ENCODE measurements at regions of chr15 and their contacts with region 1.

Region 1: DNA sequence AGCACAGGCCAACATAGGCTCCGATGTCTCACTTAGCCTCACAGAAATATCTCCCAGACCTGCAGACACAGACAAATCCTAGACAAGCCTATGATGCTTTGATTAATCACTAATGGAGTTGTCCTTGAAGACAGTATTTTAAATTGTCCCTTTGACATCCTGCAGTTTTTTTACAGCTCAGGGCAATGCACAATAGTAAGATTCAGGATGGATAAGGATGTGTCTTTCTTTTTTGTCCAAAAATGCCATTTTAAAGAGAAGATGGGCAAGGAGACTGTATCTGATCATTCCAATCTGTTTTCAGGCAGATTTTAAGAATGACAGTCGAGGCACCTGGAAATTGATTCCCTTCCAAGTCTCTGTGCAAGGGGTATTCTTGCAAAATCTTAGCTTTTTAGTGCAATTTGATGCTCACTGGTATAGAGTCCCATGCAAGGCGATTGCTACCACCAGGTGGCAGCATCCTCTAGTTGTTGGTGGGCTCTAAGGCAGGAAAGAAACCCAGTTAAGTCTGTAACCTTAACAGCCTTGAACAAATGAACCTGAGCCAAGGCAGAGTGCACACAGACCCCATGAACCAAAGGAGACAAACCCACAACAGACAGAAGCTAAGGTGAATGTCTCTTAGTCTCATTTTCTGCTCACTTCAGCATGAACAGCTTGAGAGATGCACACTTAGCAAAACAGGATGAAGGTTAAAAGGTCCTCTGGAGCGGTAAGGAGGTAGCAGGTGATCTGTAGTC is 51.2 kb upstream of the MINAR1 start:
- DNase-seq: peak; percentile 76
- H3K4me3 Mint-ChIP-seq: no peak overlapping the region
- H3K27ac Mint-ChIP-seq: no peak overlapping the region
- H3K4me1 Mint-ChIP-seq: peaks cover 3% of the 10 kb centered on the region
- H3K27me3 Mint-ChIP-seq: no peaks in the 10 kb centered on the region

Region 2: DNA sequence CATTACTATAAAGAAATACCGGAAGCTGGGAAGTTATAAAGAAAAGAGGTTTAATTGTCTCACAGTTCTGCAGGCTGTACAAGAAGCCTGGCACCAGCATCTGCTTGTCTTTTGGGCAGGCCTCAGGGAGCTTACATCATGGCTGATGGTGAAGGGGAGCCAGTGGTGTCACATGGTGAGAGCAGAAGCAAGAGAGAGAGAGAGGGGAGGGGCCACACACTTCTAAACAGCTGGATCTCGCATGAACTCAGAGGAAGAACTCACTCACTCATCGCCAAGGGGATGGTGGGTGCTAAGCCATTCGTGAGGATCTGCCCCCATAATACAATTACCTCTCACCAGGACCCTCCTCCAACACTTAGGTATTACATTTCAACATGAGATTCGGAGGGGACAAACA is 150.2 kb before region 1 on chr15:
- CTCF ChIA-PET with region 1: no interaction called
- POLR2A ChIA-PET with region 1: no interaction called
- DNase-seq: no peak
- H3K4me3 Mint-ChIP-seq: no peak overlapping the region
- H3K27ac Mint-ChIP-seq: no peak overlapping the region
- H3K4me1 Mint-ChIP-seq: no peaks in the 10 kb centered on the region
- H3K27me3 Mint-ChIP-seq: peaks cover 12% of the 10 kb centered on the region

Region 3: DNA sequence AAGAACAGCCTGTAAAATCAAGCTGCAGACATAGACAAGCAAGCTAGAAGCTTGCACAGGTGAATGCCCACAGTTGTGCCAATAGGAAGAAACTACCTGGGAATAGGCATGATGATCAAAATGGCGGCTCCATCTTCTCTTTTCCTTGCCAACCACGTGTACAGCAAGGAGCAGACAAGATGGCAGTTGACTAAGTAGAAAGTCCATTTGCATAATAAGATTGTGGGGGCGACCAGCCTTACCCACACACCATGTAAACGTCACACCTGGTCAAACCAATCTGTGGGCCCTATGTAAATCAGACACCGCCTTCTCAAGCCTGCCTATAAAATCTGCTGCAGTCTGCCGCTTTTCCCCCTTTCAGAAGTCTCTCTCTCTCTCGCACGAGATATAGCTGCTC is 123.5 kb before region 1 on chr15:
- CTCF ChIA-PET with region 1: no interaction called
- POLR2A ChIA-PET with region 1: no interaction called
- DNase-seq: no peak
- H3K4me3 Mint-ChIP-seq: no peak overlapping the region
- H3K27ac Mint-ChIP-seq: no peak overlapping the region
- H3K4me1 Mint-ChIP-seq: no peaks in the 10 kb centered on the region
- H3K27me3 Mint-ChIP-seq: peaks cover 8% of the 10 kb centered on the region

Region 4: GRCh38 chr15:79365765-79366164 is 15.2 kb before region 1 on chr15:
- CTCF ChIA-PET with region 1: interaction called, 18 read pairs
- POLR2A ChIA-PET with region 1: no interaction called
- DNase-seq: no peak
- H3K4me3 Mint-ChIP-seq: no peak overlapping the region
- H3K27ac Mint-ChIP-seq: no peak overlapping the region
- H3K4me1 Mint-ChIP-seq: no peaks in the 10 kb centered on the region
- H3K27me3 Mint-ChIP-seq: no peaks in the 10 kb centered on the region

Region 5: DNA sequence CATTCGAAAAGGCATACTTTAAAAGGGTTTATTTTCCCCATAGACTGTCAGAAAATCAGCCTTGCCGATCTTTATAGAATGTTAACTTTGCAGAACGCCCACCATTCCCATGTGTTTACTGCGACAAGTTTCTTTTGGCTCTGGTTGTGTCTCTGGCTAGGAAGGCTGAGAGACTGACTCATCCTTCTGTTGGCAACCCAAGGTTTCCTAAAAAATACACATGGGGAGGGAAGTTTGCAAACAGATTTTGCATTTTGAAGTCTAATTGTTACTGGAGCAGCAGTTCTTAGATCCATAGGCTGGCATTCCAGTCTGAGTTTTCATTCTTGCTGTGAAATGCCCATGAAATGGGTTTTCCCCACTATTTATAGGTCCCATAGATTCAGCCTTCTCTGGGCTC is 13.3 kb after region 1 on chr15:
- CTCF ChIA-PET with region 1: interaction called, 14 read pairs
- POLR2A ChIA-PET with region 1: no interaction called
- DNase-seq: no peak
- H3K4me3 Mint-ChIP-seq: no peak overlapping the region
- H3K27ac Mint-ChIP-seq: no peak overlapping the region
- H3K4me1 Mint-ChIP-seq: no peaks in the 10 kb centered on the region
- H3K27me3 Mint-ChIP-seq: no peaks in the 10 kb centered on the region